B cell (primary cell): ENCODE measurements at regions of chr11 and their contacts with region 1.

Region 1: DNA sequence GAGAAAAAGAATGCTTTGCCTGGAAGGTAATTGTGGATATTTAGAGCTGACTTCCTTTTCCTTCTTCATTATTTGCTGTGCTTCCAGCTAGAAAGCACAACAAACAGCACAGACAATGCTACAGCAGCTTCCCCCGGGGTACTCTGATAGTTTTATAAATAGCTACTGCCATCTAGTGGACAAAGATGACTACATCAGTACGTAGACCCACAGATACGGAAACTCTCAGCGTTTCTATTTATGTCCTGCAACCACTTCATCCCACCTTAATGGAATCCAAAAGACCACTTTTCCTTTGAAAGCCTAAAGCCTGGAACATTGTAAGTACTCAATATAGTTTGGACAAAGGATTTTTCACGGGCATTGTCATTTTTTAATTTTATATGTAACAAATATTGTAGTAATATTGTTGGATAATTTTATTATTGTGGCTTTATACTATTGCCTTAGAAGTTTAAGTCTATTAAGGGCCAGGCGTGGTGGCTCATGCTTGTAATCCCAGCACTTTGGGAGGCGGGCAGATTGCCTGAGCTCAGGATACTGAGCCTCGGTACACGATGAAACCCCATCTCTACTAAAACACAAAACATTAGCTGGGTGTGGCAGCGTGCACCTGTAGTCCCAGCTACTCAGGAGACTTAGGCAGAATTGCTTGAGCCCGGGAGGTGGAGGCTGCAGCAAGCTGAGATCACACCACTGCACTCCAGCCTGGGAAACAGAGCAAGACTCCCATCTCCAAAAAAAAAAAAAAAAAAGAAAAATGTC is 7.5 kb downstream of the HSPA8 start:
- DNase-seq: peak; percentile 79
- ATAC-seq: peak; percentile 87
- H3K4me3 ChIP-seq: no peak overlapping the region
- H3K4me3 Mint-ChIP-seq: peak overlapping the region; percentile 38
- H3K27ac ChIP-seq: no peak overlapping the region
- H3K27ac Mint-ChIP-seq: peak overlapping the region; percentile 85
- H3K4me1 ChIP-seq: peaks cover 35 to 46% of the 10 kb centered on the region in 2 donors
- H3K4me1 Mint-ChIP-seq: peaks cover 56% of the 10 kb centered on the region
- H3K27me3 ChIP-seq: no peaks in the 10 kb centered on the region
- H3K27me3 Mint-ChIP-seq: no peaks in the 10 kb centered on the region
- CTCF ChIP-seq: peak; percentile 83

Region 2: DNA sequence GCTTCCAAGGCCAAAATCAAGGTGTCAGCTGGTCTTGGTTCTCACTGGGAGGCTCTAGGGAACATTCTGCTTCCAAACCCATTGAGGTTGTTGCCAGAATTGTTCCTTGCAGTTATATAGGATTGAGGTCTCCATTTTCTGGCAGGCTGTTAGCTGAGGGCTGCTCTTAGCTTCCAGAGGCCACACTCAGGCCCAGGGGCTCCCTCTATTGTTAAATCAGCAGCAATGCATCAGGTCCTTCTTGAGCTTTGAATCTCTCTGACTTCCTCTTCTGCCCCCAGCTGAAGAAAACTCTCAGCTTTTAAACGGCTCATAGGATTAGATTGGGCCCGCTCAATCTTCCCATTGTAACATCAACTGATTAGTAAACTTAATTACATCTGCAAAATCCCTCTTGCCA is 33.5 kb before region 1 on chr11:
- CTCF ChIA-PET with region 1: interaction called, 23 read pairs
- POLR2A ChIA-PET with region 1: no interaction called
- intact Hi-C with region 1: no loop called
- DNase-seq: peak; percentile 58
- ATAC-seq: peak; percentile 82
- H3K4me3 ChIP-seq: no peak overlapping the region
- H3K4me3 Mint-ChIP-seq: no peak overlapping the region
- H3K27ac ChIP-seq: no peak overlapping the region
- H3K27ac Mint-ChIP-seq: no peak overlapping the region
- H3K4me1 ChIP-seq: peaks cover 0 to 9% of the 10 kb centered on the region in 2 donors
- H3K4me1 Mint-ChIP-seq: peaks cover 7% of the 10 kb centered on the region
- H3K27me3 ChIP-seq: peaks cover 0 to 6% (median 2%) of the 10 kb centered on the region in 4 experiments
- H3K27me3 Mint-ChIP-seq: peaks cover 12% of the 10 kb centered on the region
- CTCF ChIP-seq: peak; percentile 67

Region 3: GRCh38 chr11:123033895-123034294 is 20.6 kb before region 1 on chr11:
- CTCF ChIA-PET with region 1: interaction called, 16 read pairs
- POLR2A ChIA-PET with region 1: interaction called, 6 read pairs
- intact Hi-C with region 1: no loop called
- DNase-seq: no peak
- ATAC-seq: no peak
- H3K4me3 ChIP-seq: no peak overlapping the region
- H3K4me3 Mint-ChIP-seq: no peak overlapping the region
- H3K27ac ChIP-seq: no peak overlapping the region
- H3K27ac Mint-ChIP-seq: no peak overlapping the region
- H3K4me1 ChIP-seq: no peaks in the 10 kb centered on the region
- H3K4me1 Mint-ChIP-seq: no peaks in the 10 kb centered on the region
- H3K27me3 ChIP-seq: no peaks in the 10 kb centered on the region
- H3K27me3 Mint-ChIP-seq: peaks cover 11% of the 10 kb centered on the region
- CTCF ChIP-seq: no peak

Region 4: DNA sequence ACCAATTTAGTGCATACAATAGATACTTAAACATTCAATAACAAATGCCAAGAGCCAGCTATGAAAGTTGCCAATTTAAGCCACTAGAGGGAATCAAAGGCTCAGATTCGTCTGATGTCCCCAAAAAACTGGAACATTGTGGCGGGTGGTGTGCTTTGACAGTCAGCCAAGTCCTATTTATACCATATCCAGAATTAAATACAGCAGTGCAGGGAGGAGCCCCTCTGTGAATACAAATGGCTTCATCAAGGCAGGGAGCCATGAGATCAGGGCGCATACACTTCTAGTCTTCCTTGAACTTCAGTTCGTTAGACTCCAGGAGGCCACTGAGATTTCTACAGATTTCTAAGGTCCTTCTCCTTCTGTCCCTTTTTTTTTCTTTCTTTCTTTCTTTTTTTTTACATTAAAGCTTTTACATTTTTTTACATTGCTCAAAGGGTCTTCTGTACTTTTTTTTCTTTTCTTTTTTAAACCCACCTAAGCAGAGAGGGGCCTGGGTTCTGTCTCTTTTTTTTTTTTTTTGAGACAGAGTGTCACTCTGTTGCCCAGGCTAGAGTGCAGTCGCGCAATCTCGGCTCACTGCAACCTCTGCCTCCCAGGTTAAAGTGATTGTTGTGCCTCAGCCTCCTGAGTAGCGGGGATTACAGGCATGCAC is 49.0 kb after region 1 on chr11:
- CTCF ChIA-PET with region 1: interaction called, 19 read pairs
- POLR2A ChIA-PET with region 1: no interaction called
- intact Hi-C with region 1: no loop called
- DNase-seq: peak; percentile 40
- ATAC-seq: no peak
- H3K4me3 ChIP-seq: no peak overlapping the region
- H3K4me3 Mint-ChIP-seq: no peak overlapping the region
- H3K27ac ChIP-seq: no peak overlapping the region
- H3K27ac Mint-ChIP-seq: no peak overlapping the region
- H3K4me1 ChIP-seq: no peaks in the 10 kb centered on the region
- H3K4me1 Mint-ChIP-seq: peaks cover 3% of the 10 kb centered on the region
- H3K27me3 ChIP-seq: peaks cover 0 to 2% (median 0%) of the 10 kb centered on the region in 4 experiments
- H3K27me3 Mint-ChIP-seq: peaks cover 24% of the 10 kb centered on the region
- CTCF ChIP-seq: peak; percentile 61

Region 5: GRCh38 chr11:123815122-123815521 is 760.6 kb after region 1 on chr11:
- CTCF ChIA-PET with region 1: no interaction called
- POLR2A ChIA-PET with region 1: no interaction called
- intact Hi-C with region 1: no loop called
- DNase-seq: no peak
- ATAC-seq: no peak
- H3K4me3 ChIP-seq: no peak overlapping the region
- H3K4me3 Mint-ChIP-seq: no peak overlapping the region
- H3K27ac ChIP-seq: no peak overlapping the region
- H3K27ac Mint-ChIP-seq: no peak overlapping the region
- H3K4me1 ChIP-seq: no peaks in the 10 kb centered on the region
- H3K4me1 Mint-ChIP-seq: no peaks in the 10 kb centered on the region
- H3K27me3 ChIP-seq: no peaks in the 10 kb centered on the region
- H3K27me3 Mint-ChIP-seq: no peaks in the 10 kb centered on the region
- CTCF ChIP-seq: no peak